Heart left ventricle (tissue), 16 donors: ENCODE measurements at regions of chr14 and their contacts with region 1.

Region 1: GRCh38 chr14:76576047-76576741 is 185.1 kb upstream of the VASH1 start:
- DNase-seq: peak in 2 of 5 donors; percentile 24 to 37
- ATAC-seq: peak; percentile 39 to 82 (median 44)
- H3K4me3 ChIP-seq: no peak overlapping the region
- H3K27ac ChIP-seq: no peak overlapping the region
- H3K4me1 ChIP-seq: peaks cover 0 to 18% (median 5%) of the 10 kb centered on the region in 12 donors
- H3K27me3 ChIP-seq: no peaks in the 10 kb centered on the region
- CTCF ChIP-seq: no peak
- POLR2A ChIP-seq: no peak

Region 2: DNA sequence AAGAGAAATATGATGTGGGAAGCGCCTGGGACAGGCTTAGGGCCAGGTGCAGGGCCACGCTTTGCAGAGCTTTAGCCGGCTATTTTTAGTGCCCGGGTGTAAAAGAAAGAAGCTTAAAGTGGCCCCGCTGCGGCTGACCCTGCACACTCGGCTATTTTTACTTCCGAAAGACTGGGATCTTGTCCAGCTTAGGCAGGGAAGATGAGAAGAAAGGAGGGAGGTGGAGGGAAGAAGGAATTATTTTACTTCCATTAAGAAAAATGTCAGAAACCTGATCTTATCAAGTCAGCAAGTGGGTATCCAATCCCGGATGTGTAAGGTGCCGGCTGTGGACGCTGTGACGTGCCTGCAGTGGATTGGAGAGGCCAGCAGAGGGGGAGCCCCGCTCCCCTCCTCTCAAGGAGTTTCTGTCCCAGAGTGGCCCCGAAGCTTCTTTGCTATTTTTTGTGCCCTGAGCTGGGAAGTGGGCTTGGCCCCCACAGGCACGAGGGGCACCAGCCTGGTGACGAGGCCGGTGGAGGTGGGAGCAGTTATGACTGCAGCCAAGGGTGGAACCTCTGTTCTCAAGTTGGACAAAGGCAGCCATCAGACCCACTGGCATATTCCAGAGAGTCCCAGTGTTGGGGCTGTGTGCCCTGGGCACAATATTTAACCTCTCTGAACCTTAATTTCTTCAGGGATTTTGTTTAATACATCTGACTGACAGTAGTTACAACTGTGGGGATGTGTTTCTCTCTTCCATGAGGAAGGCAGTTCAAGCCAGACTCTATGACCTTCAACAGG is 102.5 kb before region 1 on chr14:
- intact Hi-C with region 1: loop called in 1 of 10 experiments (anchors 10 kb)
- DNase-seq: peak; percentile 47 to 69 (median 57)
- ATAC-seq: peak; percentile 90 to 95 (median 93)
- H3K4me3 ChIP-seq: peak overlapping the region in 10 of 12 donors; percentile 15 to 48 (median 36)
- H3K27ac ChIP-seq: peak overlapping the region in 9 of 12 donors; percentile 0 to 75 (median 52)
- H3K4me1 ChIP-seq: peaks cover 0 to 27% (median 15%) of the 10 kb centered on the region in 12 donors
- H3K27me3 ChIP-seq: no peaks in the 10 kb centered on the region
- CTCF ChIP-seq: peak in 7 of 12 donors; percentile 10 to 46 (median 31)
- POLR2A ChIP-seq: no peak

Region 3: DNA sequence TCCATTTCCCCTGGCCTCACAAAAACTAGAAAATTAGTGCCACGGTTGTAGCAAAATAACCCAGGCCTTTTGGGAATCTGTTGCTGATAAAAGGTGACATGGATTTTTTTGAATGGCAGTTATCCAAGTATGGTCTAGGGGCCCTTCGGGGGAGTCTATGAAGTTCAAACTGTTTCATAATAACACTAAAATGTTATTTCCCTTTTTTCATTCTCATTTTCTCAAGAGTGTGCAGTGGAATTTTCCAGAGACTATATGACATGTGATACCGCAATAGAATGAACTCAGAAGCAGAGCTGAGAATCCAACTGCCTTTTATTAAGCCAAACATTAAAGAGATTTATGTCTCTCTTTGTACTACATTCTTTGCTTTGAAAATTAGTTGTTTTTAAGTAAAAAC is 771.6 kb after region 1 on chr14:
- intact Hi-C with region 1: no loop called
- DNase-seq: no peak
- ATAC-seq: no peak
- H3K4me3 ChIP-seq: no peak overlapping the region
- H3K27ac ChIP-seq: peak overlapping the region in 1 of 12 donors; percentile 51
- H3K4me1 ChIP-seq: peaks cover 0 to 6% (median 0%) of the 10 kb centered on the region in 12 donors
- H3K27me3 ChIP-seq: no peaks in the 10 kb centered on the region
- CTCF ChIP-seq: no peak
- POLR2A ChIP-seq: no peak